Activated CD4-positive, alpha-beta memory T cell treated with anti-CD3 and anti-CD28 coated beads for 36 hours (primary cell): ENCODE measurements at regions of chr20 and their contacts with region 1.

Region 1: DNA sequence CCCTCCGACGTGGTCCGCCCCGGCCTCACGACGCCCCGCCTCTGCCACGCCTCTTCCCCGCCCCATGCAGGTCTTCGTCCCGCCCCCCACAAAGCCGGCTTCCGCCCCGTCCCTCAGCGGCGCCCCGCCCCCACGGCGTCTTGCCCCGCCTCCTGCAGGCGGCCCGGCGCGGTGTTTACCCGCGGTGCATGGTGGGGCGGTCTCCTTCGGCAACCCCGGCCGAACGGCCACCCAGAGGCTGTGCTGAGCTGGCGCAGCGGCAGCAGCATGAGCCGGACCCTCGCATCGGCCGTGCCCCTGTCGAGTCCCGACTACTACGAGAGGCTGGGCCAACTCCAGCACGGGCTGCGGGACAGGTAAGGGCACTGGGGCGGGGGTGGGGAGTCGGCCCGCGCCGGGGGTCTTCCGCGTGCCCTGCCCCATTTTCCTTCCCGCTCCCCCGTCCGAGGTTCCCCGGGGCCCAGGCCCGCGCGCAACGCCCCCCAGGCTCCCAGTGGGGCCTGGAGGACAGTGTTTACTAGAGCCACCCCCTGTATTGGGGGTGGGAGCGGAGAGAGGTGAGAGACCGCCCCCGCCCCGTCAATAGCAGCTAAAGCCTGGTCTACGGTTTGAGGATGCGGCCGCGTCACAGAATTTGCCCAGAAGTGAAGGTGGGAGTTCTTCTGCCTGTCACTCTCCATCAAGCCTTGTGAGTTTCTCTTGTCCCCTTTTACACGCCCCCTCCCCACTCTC is at the start of gene KIZ:
- DNase-seq: peak; percentile 98
- H3K4me3 Mint-ChIP-seq: peak within 1 kb of the TSS; percentile 81
- H3K27ac Mint-ChIP-seq: peak within 1 kb of the TSS; percentile 69
- H3K4me1 Mint-ChIP-seq: peaks cover 18% of the 10 kb centered on the region
- H3K27me3 Mint-ChIP-seq: peaks cover 3% of the 10 kb centered on the region
- total RNA-seq, gene KIZ: 13.3 to 13.5 TPM

Region 2: DNA sequence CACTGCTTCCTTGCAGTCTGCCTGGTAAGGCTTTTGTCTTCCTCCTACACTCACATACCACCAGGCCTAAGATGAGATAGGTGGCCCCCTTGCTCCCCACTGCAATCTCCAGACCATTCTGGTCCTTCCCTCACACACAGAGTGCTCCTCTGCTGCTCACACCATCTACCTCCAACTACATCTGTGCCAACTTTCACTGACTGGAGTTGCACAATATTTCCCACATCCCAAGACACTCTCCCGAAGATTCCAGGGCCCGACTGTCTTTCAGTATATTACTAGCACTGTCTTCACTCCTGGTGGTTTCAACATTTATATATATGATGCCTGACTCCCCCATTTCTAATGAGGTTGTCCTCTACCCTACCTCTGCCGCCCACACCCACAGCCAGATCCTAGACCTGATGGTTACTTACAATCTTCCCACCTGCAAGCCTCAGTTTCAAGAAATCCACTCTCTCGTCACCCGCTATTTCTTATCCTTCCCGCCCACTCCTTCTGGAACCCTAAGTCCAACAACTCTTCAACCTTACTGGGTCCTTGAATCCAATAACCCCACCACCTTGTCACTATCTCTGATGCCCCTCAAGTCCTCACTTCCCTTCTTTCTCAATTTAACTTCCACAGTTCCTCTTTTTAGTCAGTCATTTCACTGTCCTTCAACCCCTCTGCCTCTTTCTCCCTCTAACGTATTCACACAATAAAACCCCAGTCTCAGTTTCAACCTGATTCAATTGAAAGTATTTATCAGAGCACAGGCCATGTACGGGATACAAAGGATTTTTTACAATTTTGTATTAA is 435.1 kb before region 1 on chr20:
- CTCF ChIA-PET with region 1: no interaction called
- POLR2A ChIA-PET with region 1: no interaction called
- intact Hi-C with region 1: no loop called
- DNase-seq: no peak
- H3K4me3 Mint-ChIP-seq: no peak overlapping the region
- H3K27ac Mint-ChIP-seq: no peak overlapping the region
- H3K4me1 Mint-ChIP-seq: peaks cover 15% of the 10 kb centered on the region
- H3K27me3 Mint-ChIP-seq: no peaks in the 10 kb centered on the region

Region 3: DNA sequence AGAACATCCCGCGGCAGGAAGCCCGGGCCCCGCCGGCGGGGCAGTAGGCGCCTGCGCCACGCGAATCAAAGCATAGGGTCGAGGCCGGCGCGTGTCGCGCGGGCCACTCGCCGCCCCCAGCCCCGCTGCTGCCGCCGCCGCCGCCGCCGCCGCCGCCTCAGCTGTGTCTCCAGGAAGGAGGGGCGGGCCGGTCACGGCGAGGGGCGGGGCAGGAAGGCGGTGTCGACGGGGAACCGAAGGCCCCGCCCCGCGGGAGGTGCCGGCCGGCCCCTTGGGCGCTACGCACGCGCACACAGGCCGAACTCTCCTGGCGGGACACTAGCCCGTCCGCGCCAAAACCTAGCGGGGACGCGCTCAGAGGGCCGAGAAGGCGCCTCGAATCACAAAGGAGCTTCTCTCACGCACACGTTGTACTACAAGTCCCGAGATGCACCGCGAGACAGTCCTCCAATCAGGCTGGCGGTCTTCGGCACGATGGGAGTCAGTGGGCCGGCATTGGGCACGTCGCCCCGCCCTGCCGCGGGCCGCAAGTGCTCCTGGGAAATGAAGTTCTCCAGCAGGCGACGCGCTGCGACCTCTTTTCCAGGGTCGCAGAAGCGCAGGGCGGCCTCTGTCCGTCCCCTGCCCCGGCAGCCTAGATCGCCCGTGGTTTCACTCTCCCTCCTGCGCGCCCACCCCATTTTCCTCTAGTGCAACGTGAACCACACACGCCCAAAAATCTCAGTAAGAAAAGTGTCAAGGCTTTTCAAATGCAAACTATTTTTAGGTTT is 413.4 kb before region 1 on chr20 and contains the start of gene RALGAPA2:
- CTCF ChIA-PET with region 1: no interaction called
- POLR2A ChIA-PET with region 1: no interaction called
- intact Hi-C with region 1: loop called (anchors 5 kb)
- DNase-seq: peak; percentile 95
- H3K4me3 Mint-ChIP-seq: peak within 1 kb of the TSS; percentile 76
- H3K27ac Mint-ChIP-seq: peak within 1 kb of the TSS; percentile 94
- H3K4me1 Mint-ChIP-seq: peaks cover 25% of the 10 kb centered on the region
- H3K27me3 Mint-ChIP-seq: peaks cover 2% of the 10 kb centered on the region
- total RNA-seq, gene RALGAPA2: 15.9 to 16.6 TPM

Region 4: DNA sequence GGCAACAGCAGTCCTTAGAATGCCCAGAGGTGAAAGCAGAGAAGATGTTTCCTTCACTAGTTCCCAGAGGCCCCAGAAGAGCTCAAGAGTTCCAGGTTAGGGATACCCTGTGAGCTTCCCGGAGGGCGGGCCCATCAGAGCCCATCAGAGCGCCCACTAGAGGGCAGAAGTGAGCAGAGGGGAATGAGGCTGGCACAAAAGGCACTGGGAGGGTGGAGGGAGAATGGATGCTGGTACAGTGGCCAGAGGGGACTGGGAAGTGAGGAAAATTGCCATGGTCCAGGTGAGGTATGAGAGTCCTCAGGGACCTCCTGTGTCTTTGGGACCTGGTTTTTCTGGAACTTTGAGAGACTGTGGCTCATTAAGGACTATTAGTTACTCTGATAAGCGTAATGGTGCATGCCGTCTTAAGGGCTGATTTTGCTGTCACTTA is 77.2 kb before region 1 on chr20:
- CTCF ChIA-PET with region 1: interaction called, 4 read pairs
- POLR2A ChIA-PET with region 1: no interaction called
- intact Hi-C with region 1: loop called (anchors 5 kb)
- DNase-seq: peak; percentile 60
- H3K4me3 Mint-ChIP-seq: no peak overlapping the region
- H3K27ac Mint-ChIP-seq: no peak overlapping the region
- H3K4me1 Mint-ChIP-seq: no peaks in the 10 kb centered on the region
- H3K27me3 Mint-ChIP-seq: peaks cover 15% of the 10 kb centered on the region

Region 5: DNA sequence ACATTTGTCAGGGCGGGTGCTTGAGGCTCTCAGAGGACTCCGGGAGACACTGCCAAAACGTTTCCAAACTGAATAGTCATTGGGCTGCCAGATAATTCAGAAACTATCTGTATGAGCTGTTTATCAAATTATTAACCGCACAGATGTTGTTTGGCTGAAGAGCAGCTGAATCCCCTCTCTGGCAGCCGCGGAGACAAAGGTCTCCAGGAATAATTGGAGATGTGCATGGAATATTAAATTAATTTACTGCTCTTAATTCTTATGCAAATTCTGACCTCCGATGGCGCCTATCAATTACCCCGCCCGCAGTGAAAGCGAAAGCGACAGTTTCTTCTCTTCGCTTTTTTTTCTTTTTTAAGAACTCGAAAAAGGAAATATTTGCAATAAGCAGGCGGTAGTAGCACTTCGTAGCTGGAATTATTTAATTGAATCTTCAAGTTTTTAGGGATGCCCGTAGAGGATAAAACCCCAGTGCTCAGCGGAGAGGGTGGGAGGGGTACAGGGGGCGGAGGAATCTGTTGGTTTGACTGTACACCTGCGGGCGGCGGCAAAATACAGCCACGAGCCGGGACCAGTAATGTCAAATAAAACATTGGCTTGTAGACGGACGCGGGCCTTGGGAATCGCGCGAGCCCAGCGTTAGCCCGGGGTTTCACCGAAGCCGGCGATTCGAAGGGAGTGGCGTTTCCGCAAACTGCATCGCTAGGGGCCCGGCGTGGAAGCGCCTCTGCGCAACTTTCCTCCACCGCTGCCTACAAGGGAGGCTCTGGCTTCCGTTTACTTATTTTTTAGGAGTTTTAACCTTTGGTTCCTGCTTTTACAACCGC is 26.1 kb before region 1 on chr20:
- CTCF ChIA-PET with region 1: interaction called, 4 read pairs
- POLR2A ChIA-PET with region 1: interaction called, 3 read pairs
- intact Hi-C with region 1: loop called (anchors 1 kb)
- DNase-seq: peak; percentile 68
- H3K4me3 Mint-ChIP-seq: peak overlapping the region; percentile 74
- H3K27ac Mint-ChIP-seq: peak overlapping the region; percentile 63
- H3K4me1 Mint-ChIP-seq: peaks cover 30% of the 10 kb centered on the region
- H3K27me3 Mint-ChIP-seq: peaks cover 68% of the 10 kb centered on the region

Region 6: DNA sequence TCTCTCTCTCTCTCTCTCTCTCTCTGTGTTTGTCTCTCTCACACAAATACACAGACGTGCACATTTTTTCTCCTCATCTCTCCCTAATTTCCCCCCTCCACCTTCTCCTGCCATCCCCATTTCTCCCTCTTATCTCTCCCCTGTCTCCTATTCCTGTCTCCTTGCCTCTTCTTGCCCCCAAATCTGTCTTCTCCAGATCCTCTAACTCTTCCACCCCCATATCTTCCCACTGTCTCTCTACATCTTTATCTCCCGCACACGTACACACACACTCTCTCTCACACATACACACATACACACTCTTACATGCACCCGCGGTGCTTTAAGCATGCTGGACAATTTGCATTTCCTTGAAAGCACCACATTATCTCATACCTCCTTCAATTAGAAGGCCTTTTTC is 15.8 kb after region 1 on chr20:
- CTCF ChIA-PET with region 1: no interaction called
- POLR2A ChIA-PET with region 1: no interaction called
- intact Hi-C with region 1: no loop called
- DNase-seq: no peak
- H3K4me3 Mint-ChIP-seq: no peak overlapping the region
- H3K27ac Mint-ChIP-seq: no peak overlapping the region
- H3K4me1 Mint-ChIP-seq: no peaks in the 10 kb centered on the region
- H3K27me3 Mint-ChIP-seq: no peaks in the 10 kb centered on the region

Region 7: DNA sequence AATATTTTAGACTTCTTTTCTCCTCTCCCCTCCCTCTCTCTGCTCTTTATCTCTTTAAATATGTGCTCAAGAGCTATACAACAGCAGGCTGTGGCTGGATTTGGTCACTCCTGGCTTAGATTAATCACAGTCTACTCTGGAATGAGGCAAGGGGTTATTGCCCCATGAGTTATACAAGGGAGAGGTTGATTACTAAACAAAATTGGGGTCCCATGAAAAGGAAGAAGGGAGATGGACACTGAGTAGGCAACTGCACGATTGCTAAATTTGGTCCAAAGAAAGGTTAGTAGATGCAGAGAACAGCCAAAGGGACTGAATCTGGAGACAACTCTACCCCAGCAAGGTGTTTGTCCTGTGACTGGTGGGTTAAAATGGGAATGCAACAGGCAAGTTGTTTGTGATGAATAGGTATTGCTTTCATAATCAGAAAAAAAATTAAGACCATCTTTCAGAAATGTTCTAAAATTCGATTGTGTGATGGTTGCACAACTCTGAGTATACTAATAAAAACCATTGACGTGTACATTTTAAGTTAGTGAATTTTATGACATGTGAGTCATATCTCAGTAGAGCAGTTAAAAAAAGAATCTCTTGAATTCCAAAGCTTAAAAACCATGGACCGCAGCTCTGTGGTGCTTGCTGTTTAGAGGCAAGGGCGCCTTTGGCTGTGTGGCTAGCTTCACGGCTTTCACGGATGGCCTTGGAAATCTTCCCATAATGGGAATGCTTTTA is 57.0 kb after region 1 on chr20:
- CTCF ChIA-PET with region 1: no interaction called
- POLR2A ChIA-PET with region 1: no interaction called
- intact Hi-C with region 1: no loop called
- DNase-seq: no peak
- H3K4me3 Mint-ChIP-seq: no peak overlapping the region
- H3K27ac Mint-ChIP-seq: no peak overlapping the region
- H3K4me1 Mint-ChIP-seq: peaks cover 4% of the 10 kb centered on the region
- H3K27me3 Mint-ChIP-seq: no peaks in the 10 kb centered on the region